ENCODE measurements at regions of chr9 and their contacts with region 1.

Region 1: GRCh38 chr9:109574068-109574882 is 76.2 kb upstream of the PTPN3 start:
- DNase-seq: no peak
- H3K4me3 ChIP-seq: no peak overlapping the region
- H3K27ac ChIP-seq: no peak overlapping the region
- H3K4me1 ChIP-seq: peaks cover 0 to 8% (median 0%) of the 10 kb centered on the region in 3 donors
- H3K27me3 ChIP-seq: no peaks in the 10 kb centered on the region
- CTCF ChIP-seq: peak; percentile 12 to 78 (median 58)
- POLR2A ChIP-seq: no peak

Region 2: DNA sequence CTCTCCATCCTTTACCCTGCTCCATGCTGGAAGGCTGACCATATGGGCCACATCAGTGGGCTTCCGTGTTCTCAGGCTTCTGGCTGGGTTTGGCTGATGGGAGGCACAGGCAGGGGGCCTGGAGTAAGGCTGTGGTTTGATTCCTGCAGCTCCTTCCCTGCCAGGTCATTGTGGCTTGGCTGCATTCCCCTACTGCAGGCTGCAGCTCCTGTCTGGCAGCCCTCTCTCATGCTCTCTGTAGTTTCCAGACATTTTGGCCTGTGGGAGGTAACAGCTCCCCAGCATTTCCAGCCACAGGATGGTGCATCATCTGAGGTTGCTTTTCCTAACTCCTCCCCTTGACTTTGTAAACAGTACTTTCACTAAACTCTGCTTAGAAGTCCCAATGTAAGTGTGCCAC is 25.9 kb after region 1 on chr9:
- intact Hi-C with region 1: no loop called
- DNase-seq: no peak
- H3K4me3 ChIP-seq: no peak overlapping the region
- H3K27ac ChIP-seq: no peak overlapping the region
- H3K4me1 ChIP-seq: peaks cover 0 to 28% (median 0%) of the 10 kb centered on the region in 3 donors
- H3K27me3 ChIP-seq: no peaks in the 10 kb centered on the region
- CTCF ChIP-seq: no peak
- POLR2A ChIP-seq: no peak

Region 3: DNA sequence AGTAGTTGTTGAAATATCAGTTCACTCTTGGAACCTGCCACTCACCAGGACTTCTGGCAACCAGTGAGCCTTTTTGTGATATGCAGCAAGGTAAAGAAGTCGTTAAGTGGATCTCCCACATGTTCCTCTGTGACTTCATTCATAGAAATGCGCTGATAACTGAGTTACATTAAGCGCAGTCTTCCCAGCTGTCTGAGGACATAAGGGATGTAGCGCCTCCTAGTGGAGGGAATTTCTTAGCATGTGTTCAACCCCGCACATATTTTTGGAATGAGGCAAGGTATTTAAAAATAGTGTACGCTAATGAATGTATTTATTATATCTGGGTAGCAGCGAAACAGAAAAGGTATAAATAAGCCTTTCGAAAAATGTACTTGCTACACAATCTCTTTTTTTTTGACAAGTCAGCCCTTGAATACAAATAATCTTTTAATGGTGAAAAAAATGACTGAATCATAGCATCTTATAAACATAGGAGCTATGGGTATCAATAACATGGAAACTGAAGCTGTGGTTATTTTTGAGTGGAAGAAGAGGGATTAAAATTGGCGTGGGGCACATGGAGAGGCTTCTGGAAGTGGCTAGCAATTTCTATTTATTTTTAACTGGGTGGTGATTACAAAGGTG is 243.7 kb after region 1 on chr9:
- intact Hi-C with region 1: loop called (anchors 10 kb)
- DNase-seq: no peak
- H3K4me3 ChIP-seq: no peak overlapping the region
- H3K27ac ChIP-seq: no peak overlapping the region
- H3K4me1 ChIP-seq: no peaks in the 10 kb centered on the region
- H3K27me3 ChIP-seq: no peaks in the 10 kb centered on the region
- CTCF ChIP-seq: peak; percentile 40 to 88 (median 80)
- POLR2A ChIP-seq: no peak

Measured in esophagus squamous epithelium (tissue), 5 donors.